HCT116 (cell line): ENCODE measurements at regions of chr18 and their contacts with region 1.

Region 1: GRCh38 chr18:47215554-47216138 is 35.8 kb downstream of the SKOR2 start:
- DNase-seq: peak; percentile 55
- ATAC-seq: peak; percentile 92
- H3K4me3 ChIP-seq: no peak overlapping the region
- H3K27ac ChIP-seq: no peak overlapping the region
- H3K4me1 ChIP-seq: no peaks in the 10 kb centered on the region
- H3K27me3 ChIP-seq: peaks cover 90% of the 10 kb centered on the region
- CTCF ChIP-seq: peak; percentile 65 to 85 (median 78)
- POLR2A ChIP-seq: no peak
- RAD21 ChIP-seq: peak; percentile 81

Region 2: DNA sequence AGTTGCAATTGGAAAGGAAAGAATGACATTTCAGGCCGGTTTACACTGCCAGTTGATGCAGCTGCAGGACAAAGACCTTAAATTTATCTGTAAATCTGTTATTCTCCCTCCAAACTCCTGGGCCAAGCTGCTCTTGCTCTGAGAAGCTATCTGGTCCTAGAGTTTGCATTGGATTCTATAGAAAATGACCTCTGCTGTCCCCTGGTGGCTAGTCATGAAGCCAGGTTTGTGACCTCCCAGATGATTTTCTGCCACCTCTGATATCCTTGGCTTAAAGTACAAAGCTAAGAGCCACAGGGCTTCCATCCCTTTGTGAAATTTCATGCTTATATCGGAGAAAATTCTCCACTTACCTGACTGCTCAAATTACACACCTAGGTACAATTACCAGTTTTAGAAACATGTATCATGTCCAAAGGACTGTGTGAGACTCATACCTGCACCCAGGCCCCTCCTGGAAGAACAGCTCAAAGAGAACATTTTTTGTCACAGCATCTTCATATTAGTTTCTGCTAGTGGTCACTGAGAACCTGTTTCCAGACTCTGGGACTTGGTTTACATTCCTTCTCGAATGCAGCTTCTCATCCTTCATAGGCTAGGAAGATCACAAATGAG is 10.6 kb before region 1 on chr18:
- CTCF ChIA-PET with region 1: interaction called, 11 read pairs
- POLR2A ChIA-PET with region 1: no interaction called
- RAD21 ChIA-PET with region 1: no interaction called
- intact Hi-C with region 1: no loop called
- DNase-seq: peak; percentile 29
- ATAC-seq: peak; percentile 86
- H3K4me3 ChIP-seq: no peak overlapping the region
- H3K27ac ChIP-seq: no peak overlapping the region
- H3K4me1 ChIP-seq: no peaks in the 10 kb centered on the region
- H3K27me3 ChIP-seq: peaks cover 44% of the 10 kb centered on the region
- CTCF ChIP-seq: peak; percentile 77 to 87 (median 86); a peak in 5 of 6 replicates
- POLR2A ChIP-seq: no peak
- RAD21 ChIP-seq: peak; percentile 77

Region 3: DNA sequence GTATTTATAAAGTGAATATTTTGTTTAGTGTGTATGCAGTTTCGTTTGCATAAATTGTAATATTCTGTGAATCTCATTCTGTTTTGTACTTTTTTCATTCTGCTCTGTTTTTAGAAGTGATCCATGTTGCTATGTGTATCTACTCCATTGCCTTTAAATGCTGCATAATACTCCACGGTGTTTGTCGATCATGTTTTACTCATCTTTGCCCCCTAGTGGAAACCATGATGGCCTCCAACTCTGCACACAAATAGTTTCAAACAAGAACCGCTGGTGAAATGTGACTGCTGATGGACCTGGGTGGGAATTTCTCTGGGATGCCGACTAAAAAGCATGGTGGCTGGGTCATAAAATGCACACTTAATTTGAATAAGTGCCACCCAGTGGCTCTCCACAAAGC is 67.8 kb after region 1 on chr18:
- CTCF ChIA-PET with region 1: interaction called, 5 read pairs
- POLR2A ChIA-PET with region 1: no interaction called
- RAD21 ChIA-PET with region 1: no interaction called
- intact Hi-C with region 1: loop called (anchors 1 kb)
- DNase-seq: peak; percentile 42
- ATAC-seq: peak; percentile 96
- H3K4me3 ChIP-seq: no peak overlapping the region
- H3K27ac ChIP-seq: no peak overlapping the region
- H3K4me1 ChIP-seq: no peaks in the 10 kb centered on the region
- H3K27me3 ChIP-seq: peaks cover 57% of the 10 kb centered on the region
- CTCF ChIP-seq: peak; percentile 38 to 81 (median 72); a peak in 5 of 6 replicates
- POLR2A ChIP-seq: no peak
- RAD21 ChIP-seq: peak; percentile 44; the same call in 1 of the 2 replicates

Region 4: GRCh38 chr18:47595815-47596496 is 380.3 kb after region 1 on chr18:
- CTCF ChIA-PET with region 1: no interaction called
- POLR2A ChIA-PET with region 1: no interaction called
- RAD21 ChIA-PET with region 1: no interaction called
- intact Hi-C with region 1: loop called (anchors 1 kb)
- DNase-seq: peak; percentile 10
- ATAC-seq: peak; percentile 61
- H3K4me3 ChIP-seq: no peak overlapping the region
- H3K27ac ChIP-seq: no peak overlapping the region
- H3K4me1 ChIP-seq: no peaks in the 10 kb centered on the region
- H3K27me3 ChIP-seq: no peaks in the 10 kb centered on the region; the same call in 1 of the 2 replicates
- CTCF ChIP-seq: peak; percentile 62 to 73 (median 65); a peak in 5 of 6 replicates
- POLR2A ChIP-seq: no peak
- RAD21 ChIP-seq: peak; percentile 57

Region 5: DNA sequence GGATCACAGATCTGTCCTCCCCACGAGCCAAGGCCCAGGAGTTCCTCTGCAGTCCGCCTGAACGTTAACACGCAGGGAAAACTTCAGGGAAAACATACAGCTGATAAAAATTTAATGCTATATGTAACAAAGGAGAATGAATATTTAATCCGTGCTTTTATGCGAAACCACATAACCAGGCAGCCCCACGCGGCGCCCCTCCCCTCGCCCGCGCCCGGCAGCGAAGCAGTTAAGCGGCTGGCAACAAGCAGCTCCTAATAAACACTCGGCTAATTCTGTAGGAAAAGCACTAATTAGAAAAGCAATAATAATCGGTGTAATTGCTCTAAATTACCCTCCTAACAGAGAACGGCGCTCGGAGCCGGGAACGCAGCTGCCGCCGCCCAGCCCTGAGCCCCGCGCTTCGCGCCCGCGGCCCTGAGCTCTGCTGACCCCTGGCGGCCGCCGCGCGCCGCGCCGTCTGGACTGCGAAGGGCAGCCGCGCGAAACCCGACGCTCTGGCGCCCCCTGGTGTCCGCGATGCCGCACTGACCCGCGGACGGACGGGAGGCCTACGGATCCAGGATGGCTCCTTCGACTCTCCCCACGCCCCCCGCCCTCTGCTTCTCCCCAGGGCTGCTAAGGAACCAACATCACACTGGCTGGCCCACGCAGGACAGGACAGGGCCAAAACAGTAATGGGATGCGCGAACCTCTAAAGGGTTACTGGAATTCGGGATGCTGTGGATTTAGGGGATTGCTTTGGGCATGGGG is 533.4 kb after region 1 on chr18:
- CTCF ChIA-PET with region 1: interaction called, 20 read pairs
- POLR2A ChIA-PET with region 1: no interaction called
- RAD21 ChIA-PET with region 1: no interaction called
- intact Hi-C with region 1: loop called (anchors 1 kb)
- DNase-seq: peak; percentile 13
- ATAC-seq: peak; percentile 93
- H3K4me3 ChIP-seq: no peak overlapping the region
- H3K27ac ChIP-seq: no peak overlapping the region
- H3K4me1 ChIP-seq: peaks cover 0 to 4% of the 10 kb centered on the region in 2 experiments; a peak in 1 of 4 replicates
- H3K27me3 ChIP-seq: no peaks in the 10 kb centered on the region
- CTCF ChIP-seq: peak; percentile 91 to 98 (median 97)
- POLR2A ChIP-seq: no peak
- RAD21 ChIP-seq: peak; percentile 88

Region 6: GRCh38 chr18:47756364-47757016 is 540.8 kb after region 1 on chr18:
- CTCF ChIA-PET with region 1: interaction called, 20 read pairs
- POLR2A ChIA-PET with region 1: no interaction called
- RAD21 ChIA-PET with region 1: no interaction called
- intact Hi-C with region 1: loop called (anchors 1 kb)
- DNase-seq: peak; percentile 44
- ATAC-seq: peak; percentile 74
- H3K4me3 ChIP-seq: no peak overlapping the region
- H3K27ac ChIP-seq: no peak overlapping the region
- H3K4me1 ChIP-seq: peaks cover 0 to 6% of the 10 kb centered on the region in 2 experiments; a peak in 1 of 4 replicates
- H3K27me3 ChIP-seq: no peaks in the 10 kb centered on the region
- CTCF ChIP-seq: peak; percentile 67 to 98 (median 97)
- POLR2A ChIP-seq: no peak
- RAD21 ChIP-seq: peak; percentile 73

Region 7: DNA sequence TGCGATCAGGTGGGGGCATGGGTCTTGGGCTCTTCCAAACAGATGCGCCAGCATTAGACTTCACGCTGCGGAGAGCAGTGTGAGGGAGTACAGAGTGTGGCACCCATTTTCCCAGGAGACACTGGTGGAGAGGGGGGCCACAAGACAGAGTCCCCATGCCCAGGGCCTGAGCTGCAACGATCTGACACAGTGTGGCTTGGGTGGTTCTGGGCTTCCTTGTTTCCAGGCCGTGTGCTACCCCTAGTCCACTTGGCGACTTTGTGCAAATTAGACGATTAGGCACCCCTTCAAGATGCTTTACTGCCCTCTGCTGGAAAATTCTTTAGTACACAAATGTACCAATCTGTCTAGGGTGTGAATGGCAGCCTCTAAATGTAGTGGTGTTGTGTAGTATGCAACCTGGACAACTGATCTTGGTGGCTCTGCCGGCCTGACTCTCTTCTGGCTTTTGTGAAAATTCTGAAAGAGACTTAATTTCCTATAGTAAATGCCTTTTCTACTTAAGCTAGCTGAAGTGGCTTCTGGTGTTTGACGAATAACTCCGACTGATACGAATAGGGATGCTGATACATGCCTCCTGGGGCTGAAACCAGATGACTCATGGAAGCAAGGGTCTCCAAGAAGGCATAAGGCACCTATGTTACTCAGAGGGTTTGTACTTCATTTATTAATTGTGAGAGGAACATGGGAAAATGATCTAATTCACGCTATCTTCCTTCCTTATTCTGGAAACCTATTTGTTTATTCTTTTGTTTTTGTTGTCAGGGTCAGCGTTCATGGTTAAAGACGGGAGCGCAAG is 807.1 kb after region 1 on chr18:
- CTCF ChIA-PET with region 1: no interaction called
- POLR2A ChIA-PET with region 1: no interaction called
- RAD21 ChIA-PET with region 1: no interaction called
- intact Hi-C with region 1: loop called (anchors 10 kb)
- DNase-seq: peak; percentile 62
- ATAC-seq: peak; percentile 83
- H3K4me3 ChIP-seq: no peak overlapping the region
- H3K27ac ChIP-seq: no peak overlapping the region
- H3K4me1 ChIP-seq: peaks cover 4 to 8% of the 10 kb centered on the region in 2 experiments; a peak in 3 of 4 replicates
- H3K27me3 ChIP-seq: no peaks in the 10 kb centered on the region; the same call in 1 of the 2 replicates
- CTCF ChIP-seq: peak; percentile 51 to 81 (median 66); a peak in 5 of 6 replicates
- POLR2A ChIP-seq: no peak
- RAD21 ChIP-seq: peak; percentile 88